GM10248 (cell line): ENCODE measurements at regions of chr1 and their contacts with region 1.

Region 1: DNA sequence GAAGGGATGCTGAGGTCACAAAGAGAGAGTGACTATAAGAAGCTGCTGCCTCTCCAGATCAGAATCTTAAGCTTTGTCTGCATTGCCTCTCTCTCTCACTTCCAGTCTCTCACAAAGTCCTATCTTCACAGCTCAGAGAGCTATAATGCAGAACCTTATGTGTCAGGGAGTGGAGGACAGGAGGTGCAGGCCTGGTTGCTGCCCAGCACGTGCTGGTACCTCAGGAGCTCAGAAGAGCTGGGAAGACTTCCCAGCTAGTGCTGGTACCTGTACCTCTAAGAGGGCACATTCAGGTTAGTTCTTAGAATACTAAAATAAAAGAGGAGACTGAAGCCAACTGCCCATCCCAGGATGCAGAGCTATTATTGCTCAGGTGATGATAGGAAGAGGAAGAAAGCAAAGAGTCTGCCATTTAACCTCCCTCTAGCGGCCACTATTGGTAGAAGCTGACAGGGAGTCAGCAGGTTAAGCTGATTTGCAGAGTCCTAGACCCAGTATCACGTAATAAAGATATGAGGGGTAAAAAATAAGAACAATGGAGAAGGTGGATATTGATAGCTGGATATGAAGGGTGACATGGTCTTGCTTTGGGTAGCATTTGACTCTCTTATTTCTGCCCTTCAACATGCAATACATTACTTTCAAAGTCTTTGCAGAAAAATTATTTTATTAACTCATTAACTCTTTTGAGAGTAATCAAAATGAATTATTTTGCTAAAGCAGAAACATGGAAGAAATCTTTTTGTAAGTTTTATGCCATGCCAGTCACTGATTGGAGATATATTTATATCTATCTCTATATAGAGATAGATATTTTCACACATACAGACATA is 138.1 kb upstream of the HMCN1 start:
- DNase-seq: peak; percentile 54
- CTCF ChIP-seq: peak; percentile 69

Region 2: DNA sequence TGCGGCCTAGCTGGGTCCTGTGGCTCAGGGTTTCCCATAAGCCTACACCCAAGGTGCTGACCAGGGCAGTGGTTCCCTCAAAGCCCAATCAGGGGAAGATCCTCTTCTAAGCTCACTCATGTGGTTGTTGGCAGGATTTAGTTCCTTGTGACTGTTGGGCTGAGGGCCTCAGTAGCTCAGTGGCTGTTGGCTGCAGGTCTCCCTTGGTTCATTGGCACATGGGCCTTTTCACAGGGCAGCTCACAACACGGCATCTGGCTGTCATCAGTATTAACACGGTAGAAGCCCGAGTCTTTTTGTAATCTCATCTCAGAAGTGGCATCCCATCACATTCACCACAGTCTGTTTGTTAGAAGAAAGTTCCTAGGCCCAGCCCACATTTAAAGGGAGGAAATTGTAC is 50.0 kb before region 1 on chr1:
- CTCF ChIA-PET with region 1: interaction called, 14 read pairs
- POLR2A ChIA-PET with region 1: no interaction called
- DNase-seq: no peak
- CTCF ChIP-seq: no peak

Region 3: DNA sequence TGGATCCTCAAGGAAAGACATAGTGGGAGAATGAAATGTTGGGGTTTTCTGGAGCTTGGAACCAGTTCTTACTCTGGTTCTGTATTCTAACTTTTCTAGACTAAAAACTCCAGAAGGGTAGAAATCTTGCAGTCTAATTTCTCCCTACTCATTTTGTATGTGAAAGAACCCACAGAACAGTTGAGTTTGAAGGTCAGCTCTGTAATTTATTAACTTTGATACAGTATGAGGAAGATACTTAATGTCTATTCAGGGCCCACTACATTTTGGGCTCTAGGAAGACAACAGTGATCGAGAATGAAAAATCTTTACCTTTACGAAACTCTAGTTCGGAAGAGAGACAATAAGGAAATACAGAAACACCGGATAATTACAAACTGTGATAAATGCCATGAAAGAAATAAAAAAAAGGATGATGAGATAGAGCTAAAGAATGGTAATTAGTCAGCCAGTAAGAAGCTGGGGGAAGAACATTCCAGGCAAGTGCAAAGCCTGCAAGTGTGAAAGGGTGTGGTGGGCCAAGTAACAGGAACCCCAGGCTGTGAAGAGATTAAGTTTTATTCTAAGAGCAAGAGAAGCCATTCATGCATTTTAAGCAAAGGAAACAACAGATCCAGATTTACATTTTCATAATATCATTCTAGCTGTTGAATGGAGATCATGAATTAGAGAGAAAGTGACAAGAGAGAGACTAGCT is 21.8 kb before region 1 on chr1:
- CTCF ChIA-PET with region 1: interaction called, 14 read pairs
- POLR2A ChIA-PET with region 1: no interaction called
- DNase-seq: no peak
- CTCF ChIP-seq: no peak

Region 4: GRCh38 chr1:185608177-185608576 is 12.1 kb after region 1 on chr1:
- CTCF ChIA-PET with region 1: interaction called, 18 read pairs
- POLR2A ChIA-PET with region 1: no interaction called
- DNase-seq: no peak
- CTCF ChIP-seq: no peak

Region 5: DNA sequence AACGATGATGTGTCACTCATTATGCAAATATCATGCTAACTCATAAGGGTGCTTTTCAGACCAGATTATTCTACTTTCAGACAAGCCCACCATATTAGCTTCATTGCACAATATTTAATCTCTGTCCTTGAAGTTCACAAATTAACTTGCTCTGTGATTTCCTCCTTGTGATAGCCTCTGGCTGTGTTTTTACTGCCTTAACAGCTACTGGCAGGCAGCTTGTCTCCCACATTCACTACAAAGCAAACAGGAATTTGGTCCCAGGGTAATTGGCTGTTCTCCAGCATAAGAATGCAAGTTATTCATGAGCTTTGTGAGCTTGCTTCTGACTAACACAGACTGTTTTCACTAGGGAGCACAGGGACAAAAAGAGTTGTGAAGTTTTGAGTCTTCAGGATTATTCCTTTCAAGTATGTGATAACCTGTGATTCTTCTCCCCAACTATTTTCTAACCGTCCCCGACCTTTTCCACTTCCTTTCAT is 50.2 kb after region 1 on chr1:
- CTCF ChIA-PET with region 1: interaction called, 12 read pairs
- POLR2A ChIA-PET with region 1: no interaction called
- DNase-seq: no peak
- CTCF ChIP-seq: no peak

Region 6: DNA sequence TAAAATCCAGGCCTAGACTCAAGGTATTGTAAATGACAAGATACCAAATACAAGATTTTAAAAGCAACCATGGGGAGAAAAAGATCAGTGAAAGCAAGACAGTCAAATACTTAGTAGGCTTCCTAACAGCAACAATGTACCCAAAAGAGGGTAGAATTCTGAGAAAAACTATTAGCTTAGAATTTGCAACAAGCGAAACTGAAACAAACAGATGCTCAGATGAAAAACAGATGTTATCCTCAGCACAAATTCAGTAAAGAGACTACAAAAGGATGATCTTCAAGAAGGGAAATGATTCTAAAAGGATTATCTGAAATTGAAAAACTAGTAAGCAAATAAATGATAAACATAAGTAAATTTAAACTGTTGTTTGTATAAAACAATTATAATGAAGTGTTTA is 824.9 kb after region 1 on chr1:
- CTCF ChIA-PET with region 1: no interaction called
- POLR2A ChIA-PET with region 1: no interaction called
- DNase-seq: peak; percentile 36
- CTCF ChIP-seq: no peak